WTC11 (cell line): ENCODE measurements at regions of chr19 and their contacts with region 1.

Region 1: DNA sequence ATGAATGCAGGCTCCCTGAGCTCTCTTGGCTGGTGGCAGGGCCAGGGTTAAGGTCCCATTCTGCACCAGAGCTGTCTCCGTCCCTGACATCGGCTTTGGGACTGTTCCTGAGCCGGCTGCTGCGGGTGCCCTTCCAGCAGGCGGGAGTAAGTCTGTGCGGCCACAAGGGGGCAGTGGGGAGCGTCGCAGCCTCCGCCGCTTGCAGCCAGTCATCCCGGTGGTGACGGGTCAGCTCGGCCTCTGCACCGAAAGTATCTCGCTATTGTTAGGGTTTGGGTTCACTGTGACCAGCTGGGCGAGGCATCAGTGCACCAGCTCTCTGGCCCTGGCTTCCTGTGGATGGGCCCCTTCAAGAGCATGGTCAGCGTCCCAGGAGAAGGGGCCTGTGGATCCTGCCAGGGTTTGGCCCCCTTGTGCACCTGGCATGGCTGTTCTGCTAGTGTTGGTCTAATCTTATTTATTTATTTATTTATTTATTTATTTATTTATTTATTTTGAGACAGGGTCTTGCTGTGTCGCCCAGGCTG is 15.1 kb downstream of the NDUFB7 start:
- DNase-seq: peak; percentile 90
- ATAC-seq: peak; percentile 75
- H3K4me3 Mint-ChIP-seq: no peak overlapping the region
- H3K27ac Mint-ChIP-seq: peak overlapping the region; percentile 65; the same call in 1 of the 2 replicates
- H3K4me1 Mint-ChIP-seq: peaks cover 31% of the 10 kb centered on the region
- H3K27me3 Mint-ChIP-seq: no peaks in the 10 kb centered on the region
- CTCF ChIP-seq: peak; percentile 94

Region 2: DNA sequence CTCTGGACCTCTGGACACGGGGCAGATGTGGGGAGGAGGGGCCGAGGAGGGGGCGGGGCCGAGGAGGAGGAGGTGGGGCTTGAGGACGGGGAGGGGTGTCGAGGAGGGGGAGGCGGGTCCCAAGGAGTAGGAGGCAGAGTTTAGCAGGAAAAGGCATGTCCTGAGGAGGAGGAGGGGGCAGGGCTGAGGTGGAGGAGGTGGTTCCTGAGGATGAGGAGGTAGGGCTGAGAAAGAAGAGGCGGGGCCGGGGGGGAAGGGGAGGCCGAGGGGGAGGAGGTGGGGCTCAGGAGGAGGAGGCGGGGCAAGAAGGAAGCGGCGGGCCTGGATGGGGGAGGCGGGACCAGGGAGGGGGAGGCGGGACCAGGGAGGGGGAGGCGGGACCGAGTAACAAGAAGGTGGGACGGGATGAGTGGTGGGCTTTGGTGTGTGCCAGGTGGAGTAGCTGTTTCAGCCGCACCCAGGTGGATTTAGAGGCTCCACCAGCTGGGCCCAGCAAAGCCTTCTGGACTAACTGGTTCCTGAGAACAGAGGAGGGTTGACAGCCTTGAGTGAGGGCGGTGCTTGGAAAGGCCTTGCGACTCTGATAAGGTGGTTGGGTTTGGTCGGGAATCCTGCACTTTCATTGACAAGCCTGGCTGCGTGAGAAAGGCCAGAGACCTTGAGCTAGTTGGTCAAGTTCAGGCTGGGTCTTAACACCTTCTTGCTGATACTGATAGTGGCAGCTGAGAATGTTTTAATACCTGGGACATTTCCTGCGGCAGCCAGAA is 19.6 kb before region 1 on chr19:
- CTCF ChIA-PET with region 1: interaction called, 18 read pairs
- POLR2A ChIA-PET with region 1: interaction called, 3 read pairs
- DNase-seq: peak; percentile 96
- ATAC-seq: peak; percentile 99
- H3K4me3 Mint-ChIP-seq: peak overlapping the region; percentile 58
- H3K27ac Mint-ChIP-seq: peak overlapping the region; percentile 87
- H3K4me1 Mint-ChIP-seq: peaks cover 7% of the 10 kb centered on the region
- H3K27me3 Mint-ChIP-seq: no peaks in the 10 kb centered on the region
- CTCF ChIP-seq: no peak

Region 3: DNA sequence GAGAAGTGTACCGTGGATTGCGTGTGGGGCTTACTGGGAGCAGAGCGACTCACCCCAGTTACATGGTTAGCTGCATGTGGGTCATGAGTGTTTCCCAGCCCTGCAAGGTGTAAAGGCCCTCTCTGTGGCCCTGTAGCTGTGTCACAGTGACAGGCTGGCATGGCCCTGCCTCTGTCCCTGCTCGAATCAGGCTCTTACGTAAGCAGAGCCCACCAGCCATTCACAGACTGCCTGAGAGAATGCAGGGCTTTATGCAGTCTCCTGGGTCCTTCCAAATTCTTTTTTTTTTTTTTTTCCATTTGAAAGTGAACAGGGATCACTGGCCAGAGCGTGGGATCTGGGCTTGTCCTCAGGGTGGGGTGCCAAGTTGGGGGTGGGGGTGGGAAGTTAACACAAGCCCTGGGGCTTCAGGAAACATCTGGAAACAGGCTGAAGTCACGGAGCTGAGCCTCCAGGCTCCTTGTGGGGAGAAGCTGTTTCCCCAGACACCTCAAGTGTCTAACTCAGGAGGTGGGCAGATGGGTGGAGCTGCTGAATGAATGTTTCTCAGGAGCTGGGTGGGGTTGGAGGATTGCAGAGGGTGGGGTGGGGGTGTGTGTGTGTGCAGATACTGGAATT is 13.9 kb before region 1 on chr19:
- CTCF ChIA-PET with region 1: interaction called, 18 read pairs
- POLR2A ChIA-PET with region 1: no interaction called
- DNase-seq: no peak
- ATAC-seq: peak; percentile 76
- H3K4me3 Mint-ChIP-seq: no peak overlapping the region
- H3K27ac Mint-ChIP-seq: no peak overlapping the region
- H3K4me1 Mint-ChIP-seq: peaks cover 6% of the 10 kb centered on the region
- H3K27me3 Mint-ChIP-seq: no peaks in the 10 kb centered on the region
- CTCF ChIP-seq: no peak

Region 4: DNA sequence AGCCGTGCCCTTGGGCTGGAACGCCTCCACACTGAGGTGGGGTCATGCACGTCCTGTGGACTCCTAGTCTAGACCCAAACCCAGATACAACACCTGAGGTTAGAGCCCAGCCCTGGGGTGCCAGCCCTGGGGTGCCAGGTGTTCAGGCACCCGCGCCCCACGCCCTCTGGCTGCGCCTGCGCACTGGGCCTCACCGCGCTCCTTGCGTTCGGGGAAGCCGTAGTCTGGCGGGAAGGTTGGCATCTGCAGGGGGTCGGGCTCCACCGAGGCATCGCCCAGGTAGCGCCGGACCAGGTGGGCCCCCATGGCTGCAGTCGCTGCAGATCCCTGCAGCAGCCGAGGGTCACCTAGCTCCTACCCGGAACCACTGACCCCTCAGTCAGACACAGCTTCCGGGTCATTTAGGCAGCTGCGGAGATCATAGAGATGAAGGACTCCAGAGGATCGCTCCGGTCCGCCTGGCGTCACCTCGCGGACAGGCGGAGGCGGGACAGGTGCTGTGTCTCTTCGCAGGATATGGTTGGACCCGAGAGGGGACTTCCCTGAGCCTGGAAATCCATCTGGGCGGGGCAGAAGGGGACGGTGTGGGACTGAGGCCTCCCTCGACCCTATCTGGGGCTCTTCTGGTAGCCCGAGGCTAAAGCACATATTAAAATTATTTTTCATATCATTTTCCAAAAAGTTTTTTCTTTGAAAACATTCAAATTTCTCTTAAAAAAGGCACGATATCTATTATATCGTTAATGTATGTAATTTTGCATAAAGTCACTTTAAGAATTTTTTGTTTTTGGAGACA is 15.2 kb after region 1 on chr19 and contains the start of gene NDUFB7:
- CTCF ChIA-PET with region 1: interaction called, 39 read pairs
- POLR2A ChIA-PET with region 1: no interaction called
- DNase-seq: peak; percentile 90
- ATAC-seq: peak; percentile 92
- H3K4me3 Mint-ChIP-seq: peak within 1 kb of the TSS; percentile 97
- H3K27ac Mint-ChIP-seq: peak within 1 kb of the TSS; percentile 95
- H3K4me1 Mint-ChIP-seq: peaks cover 7% of the 10 kb centered on the region
- H3K27me3 Mint-ChIP-seq: no peaks in the 10 kb centered on the region
- CTCF ChIP-seq: 0 out of 2 replicates have a peak, but pooled peaks have one; percentile 18
- total RNA-seq, gene NDUFB7: 240 to 255 TPM (median 254 TPM) in 3 replicates

Region 5: DNA sequence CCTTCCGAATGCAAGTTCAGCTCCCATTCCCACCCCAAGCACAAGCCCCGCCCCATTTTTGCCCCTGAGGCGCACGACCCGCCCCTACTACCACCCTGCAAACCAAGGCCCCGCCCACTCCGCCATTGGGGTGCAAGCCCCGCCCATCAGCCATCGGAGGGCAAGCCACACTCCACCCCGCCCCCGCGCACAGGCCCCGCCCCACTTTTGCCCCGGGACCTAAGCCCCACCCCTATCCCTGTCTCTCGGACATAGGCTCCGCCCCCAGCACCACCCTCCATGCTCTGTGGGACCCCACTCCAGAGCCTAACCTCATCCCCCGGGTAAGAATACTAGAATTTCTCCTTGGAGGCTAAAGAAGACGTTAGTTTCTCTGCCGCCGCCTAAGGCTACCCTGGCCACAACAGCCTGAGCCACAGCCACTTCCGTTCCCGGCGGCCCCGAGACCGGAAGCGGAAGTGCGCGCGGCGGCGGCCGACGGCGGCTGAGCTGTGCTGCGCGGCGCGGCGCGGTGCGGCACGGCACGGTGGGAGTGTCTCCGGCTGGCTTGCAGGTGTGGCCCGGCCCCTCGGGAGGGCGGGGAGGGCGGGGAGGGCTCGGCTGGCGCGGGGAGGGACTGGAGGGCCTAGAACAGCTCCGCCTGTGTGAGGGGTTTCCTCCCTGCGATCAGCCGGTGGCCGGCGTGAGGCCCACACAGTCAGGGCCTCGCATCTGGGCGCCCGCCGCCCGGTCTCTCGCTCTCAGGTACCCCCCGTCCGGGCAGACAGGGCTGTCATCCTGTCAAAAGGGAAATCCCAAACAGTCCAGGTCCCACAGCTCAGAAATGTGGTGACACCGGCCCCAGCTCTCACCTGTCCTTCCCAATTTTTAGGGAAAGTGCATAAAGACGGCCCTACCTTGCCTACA is 133.1 kb after region 1 on chr19 and contains the start of gene ZNF333:
- CTCF ChIA-PET with region 1: interaction called, 24 read pairs
- POLR2A ChIA-PET with region 1: interaction called, 3 read pairs
- DNase-seq: peak; percentile 100
- ATAC-seq: peak; percentile 92
- H3K4me3 Mint-ChIP-seq: peak within 1 kb of the TSS; percentile 84
- H3K27ac Mint-ChIP-seq: peak within 1 kb of the TSS; percentile 98
- H3K4me1 Mint-ChIP-seq: peaks cover 11% of the 10 kb centered on the region
- H3K27me3 Mint-ChIP-seq: peaks cover 4% of the 10 kb centered on the region; the same call in 1 of the 2 replicates
- CTCF ChIP-seq: no peak
- total RNA-seq, gene ZNF333: 13.5 to 16.2 TPM (median 14.8 TPM) in 3 replicates